ENCODE measurements at regions of chr2 and their contacts with region 1.

Region 1: DNA sequence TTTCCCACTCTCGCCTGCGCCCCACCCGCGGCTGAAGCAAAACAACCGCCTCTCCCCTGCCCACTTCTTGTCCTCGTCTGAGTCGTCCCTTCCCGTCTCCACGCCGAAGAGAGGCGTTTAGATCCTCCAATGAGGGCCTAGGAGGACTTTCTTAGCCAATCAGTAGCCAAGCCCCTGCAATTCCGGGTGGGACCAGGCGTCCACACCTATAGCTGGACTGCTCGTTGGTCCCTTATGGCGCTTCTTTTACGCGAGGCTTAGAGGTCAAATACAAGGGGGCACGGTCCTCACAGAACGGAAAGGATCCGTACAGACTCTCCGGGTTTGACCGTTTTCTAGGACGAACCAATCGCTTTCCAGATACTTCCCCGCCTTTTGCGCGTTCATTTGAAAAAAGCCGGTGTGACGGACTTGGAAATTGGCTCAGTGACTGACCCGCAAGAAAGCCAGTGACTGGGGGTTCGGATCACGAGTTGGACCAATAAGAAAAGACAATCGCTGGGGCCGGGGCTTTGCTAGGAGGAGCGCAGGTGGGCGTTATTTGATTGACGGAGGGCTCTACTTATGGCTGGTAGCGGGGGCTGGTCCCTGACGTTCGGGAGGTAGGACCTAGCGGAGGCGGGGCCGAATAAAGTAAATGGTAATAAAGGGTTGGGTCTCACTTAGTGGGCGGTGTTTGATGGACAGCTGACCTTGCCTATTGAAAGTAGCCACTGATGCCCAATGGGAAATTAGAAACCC is 565 bp upstream of the PPM1B start:
- DNase-seq: peak; percentile 99
- ATAC-seq: peak; percentile 84
- H3K4me3 ChIP-seq: peak overlapping the region; percentile 76
- H3K27ac ChIP-seq: peak overlapping the region; percentile 85
- H3K4me1 ChIP-seq: peaks cover 16% of the 10 kb centered on the region
- H3K27me3 ChIP-seq: no peaks in the 10 kb centered on the region
- CTCF ChIP-seq: no peak

Region 2: DNA sequence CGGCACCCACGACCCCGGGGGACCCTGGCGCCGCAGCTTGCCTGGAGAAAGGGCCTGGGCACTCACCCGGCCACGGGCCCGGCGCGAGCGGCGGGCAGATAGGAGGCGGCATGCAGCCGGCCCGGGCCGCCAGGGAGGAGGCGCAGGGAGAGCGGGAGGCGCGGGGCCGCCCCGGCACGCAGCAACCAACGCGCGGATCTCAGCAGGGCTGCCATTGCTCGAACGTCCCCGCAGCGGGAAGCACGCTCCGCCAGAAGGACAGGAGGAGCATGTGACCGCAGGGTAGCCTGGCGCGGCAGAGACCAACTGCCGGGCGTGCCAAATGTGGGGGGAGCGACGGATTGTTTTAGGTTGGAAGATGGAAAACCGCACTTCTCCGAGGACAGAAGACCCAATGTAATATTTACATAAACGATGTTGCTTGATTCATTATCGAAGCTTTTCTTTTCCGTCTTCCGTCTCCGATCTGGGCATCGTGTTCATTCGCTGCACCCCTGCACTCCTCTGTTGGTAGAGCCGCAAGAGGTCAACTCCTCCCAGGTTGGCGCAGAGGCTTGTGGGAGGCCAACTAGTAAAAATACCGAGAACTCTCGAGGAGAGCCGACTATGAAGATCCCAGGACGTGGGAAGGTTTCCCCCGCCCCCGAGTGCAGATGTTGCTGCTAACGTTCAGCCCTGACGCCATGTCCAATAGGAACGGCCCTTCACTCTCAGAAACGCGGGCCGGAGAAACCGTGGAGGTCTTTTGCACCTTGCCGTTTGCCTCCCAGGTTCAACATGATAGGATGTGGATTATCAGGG is 172.2 kb before region 1 on chr2 and contains the start of gene LRPPRC:
- CTCF ChIA-PET with region 1: no interaction called
- POLR2A ChIA-PET with region 1: no interaction called
- intact Hi-C with region 1: loop called (anchors 5 kb)
- DNase-seq: peak; percentile 94
- ATAC-seq: peak; percentile 93
- H3K4me3 ChIP-seq: peak within 1 kb of the TSS; percentile 89
- H3K27ac ChIP-seq: peak within 1 kb of the TSS; percentile 33; the same call in 1 of the 2 replicates
- H3K4me1 ChIP-seq: peaks cover 13% of the 10 kb centered on the region
- H3K27me3 ChIP-seq: no peaks in the 10 kb centered on the region
- CTCF ChIP-seq: no peak
- total RNA-seq, gene LRPPRC: 94.8 and 113 TPM in 2 replicates

Region 3: GRCh38 chr2:44100351-44100750 is 67.8 kb before region 1 on chr2:
- CTCF ChIA-PET with region 1: no interaction called
- POLR2A ChIA-PET with region 1: no interaction called
- intact Hi-C with region 1: loop called (anchors 2 kb)
- DNase-seq: peak; percentile 75
- ATAC-seq: peak; percentile 93
- H3K4me3 ChIP-seq: no peak overlapping the region
- H3K27ac ChIP-seq: no peak overlapping the region
- H3K4me1 ChIP-seq: peaks cover 12% of the 10 kb centered on the region
- H3K27me3 ChIP-seq: no peaks in the 10 kb centered on the region
- CTCF ChIP-seq: no peak

Region 4: DNA sequence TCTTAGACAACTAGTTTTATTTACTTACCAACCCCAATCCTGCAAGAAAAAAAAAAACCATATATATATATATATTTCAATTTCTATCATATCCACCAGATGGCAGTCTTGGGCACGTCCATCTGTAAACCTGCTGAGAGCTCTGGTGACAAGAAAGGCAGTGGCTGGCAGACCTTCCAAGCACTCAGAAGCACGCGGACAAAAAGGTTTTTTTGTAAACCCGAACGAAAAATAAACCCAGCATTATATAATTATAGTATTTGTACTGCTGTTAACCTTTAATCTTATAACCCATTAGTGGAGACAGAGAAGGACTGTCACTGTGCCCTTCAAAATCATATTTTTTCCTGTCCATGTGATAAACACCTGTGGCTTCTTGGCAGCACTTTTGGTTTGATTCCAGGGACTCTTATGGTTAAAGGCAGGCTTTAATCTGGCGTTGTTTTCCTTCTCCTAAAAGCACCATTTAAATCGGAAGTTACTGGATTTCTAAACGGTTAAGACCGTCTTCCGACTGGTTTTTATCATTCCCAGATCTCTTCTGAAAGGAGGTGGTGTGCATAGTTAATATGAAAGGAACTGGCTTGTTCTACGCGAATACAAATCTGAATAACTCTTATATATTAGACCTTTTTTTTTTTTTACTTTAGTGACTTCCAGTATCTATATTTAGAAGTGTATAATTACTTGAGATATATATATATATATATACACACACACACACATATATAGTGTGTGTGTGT is 76.2 kb after region 1 on chr2:
- CTCF ChIA-PET with region 1: no interaction called
- POLR2A ChIA-PET with region 1: no interaction called
- intact Hi-C with region 1: loop called (anchors 2 kb)
- DNase-seq: peak; percentile 79
- ATAC-seq: peak; percentile 49
- H3K4me3 ChIP-seq: peak overlapping the region; percentile 78
- H3K27ac ChIP-seq: peak overlapping the region; percentile 8; the same call in 1 of the 2 replicates
- H3K4me1 ChIP-seq: peaks cover 21% of the 10 kb centered on the region
- H3K27me3 ChIP-seq: no peaks in the 10 kb centered on the region
- CTCF ChIP-seq: peak; percentile 50

Region 5: DNA sequence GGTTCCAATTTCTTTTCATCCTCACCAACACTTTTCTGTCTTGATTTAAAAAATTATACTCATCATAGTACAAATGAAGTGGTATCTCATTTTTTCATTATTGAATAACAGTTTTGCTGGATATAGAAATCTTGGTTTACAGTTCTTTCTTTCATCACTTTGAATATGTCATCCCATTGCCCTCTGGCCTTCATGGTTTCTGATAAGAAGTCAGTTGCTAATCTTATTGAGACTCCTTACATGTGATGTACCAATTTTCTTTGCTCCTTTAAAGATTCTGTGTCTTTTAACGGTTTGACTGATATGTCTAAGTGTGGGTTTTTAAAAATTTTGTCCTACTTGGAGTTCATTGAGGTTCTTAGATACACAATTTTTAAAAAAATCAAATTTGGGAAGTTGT is 142.2 kb after region 1 on chr2:
- CTCF ChIA-PET with region 1: no interaction called
- POLR2A ChIA-PET with region 1: no interaction called
- intact Hi-C with region 1: no loop called
- DNase-seq: no peak
- ATAC-seq: no peak
- H3K4me3 ChIP-seq: no peak overlapping the region
- H3K27ac ChIP-seq: no peak overlapping the region
- H3K4me1 ChIP-seq: 0 out of 2 replicates have a peak, but pooled peaks cover 9% of the 10 kb centered on the region
- H3K27me3 ChIP-seq: no peaks in the 10 kb centered on the region
- CTCF ChIP-seq: no peak

Region 6: GRCh38 chr2:44329343-44329742 is 161.2 kb after region 1 on chr2:
- CTCF ChIA-PET with region 1: no interaction called
- POLR2A ChIA-PET with region 1: interaction called, 23 read pairs
- intact Hi-C with region 1: no loop called
- DNase-seq: no peak
- ATAC-seq: no peak
- H3K4me3 ChIP-seq: no peak overlapping the region
- H3K27ac ChIP-seq: no peak overlapping the region
- H3K4me1 ChIP-seq: no peaks in the 10 kb centered on the region
- H3K27me3 ChIP-seq: no peaks in the 10 kb centered on the region
- CTCF ChIP-seq: no peak